HEK293 (cell line): ENCODE measurements at regions of chr7 and their contacts with region 1.

Region 1: GRCh38 chr7:106153891-106154449 is 41.9 kb upstream of the SYPL1 start:
- H3K4me3 ChIP-seq: no peak overlapping the region
- H3K27ac ChIP-seq: no peak overlapping the region
- H3K4me1 ChIP-seq: no peaks in the 10 kb centered on the region
- CTCF ChIP-seq: peak; percentile 84

Region 2: DNA sequence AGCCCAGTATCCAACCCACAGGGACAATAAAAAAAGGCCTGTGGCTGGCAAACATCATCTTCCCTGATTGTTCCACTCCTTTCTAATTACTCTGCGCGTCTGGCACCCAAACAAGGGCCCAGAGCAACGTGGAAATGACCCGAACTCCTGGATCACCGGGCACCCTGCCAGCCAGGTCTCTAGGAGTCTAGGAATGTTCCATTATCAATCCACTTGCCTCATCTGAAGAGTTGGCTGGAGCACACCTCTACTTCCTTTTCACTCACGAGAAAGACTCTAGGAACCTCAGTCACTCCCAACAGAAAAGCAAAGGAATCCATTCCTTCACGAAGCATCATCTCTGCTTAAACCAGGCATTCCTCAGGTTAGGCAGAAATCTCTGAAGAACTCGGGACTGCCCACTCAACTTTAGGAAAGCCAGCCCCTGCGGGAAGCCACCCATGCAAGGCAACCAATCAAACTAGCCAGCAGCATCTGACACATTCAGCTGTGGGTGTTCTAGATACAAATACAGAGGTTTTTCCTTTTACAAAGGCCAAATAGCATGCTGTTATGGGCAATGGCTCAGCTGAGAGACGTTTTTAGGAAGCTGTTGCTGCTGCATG is 315.2 kb before region 1 on chr7:
- CTCF ChIA-PET with region 1: no interaction called
- POLR2A ChIA-PET with region 1: no interaction called
- H3K4me3 ChIP-seq: no peak overlapping the region
- H3K27ac ChIP-seq: no peak overlapping the region
- H3K4me1 ChIP-seq: peaks cover 11% of the 10 kb centered on the region
- CTCF ChIP-seq: no peak

Region 3: DNA sequence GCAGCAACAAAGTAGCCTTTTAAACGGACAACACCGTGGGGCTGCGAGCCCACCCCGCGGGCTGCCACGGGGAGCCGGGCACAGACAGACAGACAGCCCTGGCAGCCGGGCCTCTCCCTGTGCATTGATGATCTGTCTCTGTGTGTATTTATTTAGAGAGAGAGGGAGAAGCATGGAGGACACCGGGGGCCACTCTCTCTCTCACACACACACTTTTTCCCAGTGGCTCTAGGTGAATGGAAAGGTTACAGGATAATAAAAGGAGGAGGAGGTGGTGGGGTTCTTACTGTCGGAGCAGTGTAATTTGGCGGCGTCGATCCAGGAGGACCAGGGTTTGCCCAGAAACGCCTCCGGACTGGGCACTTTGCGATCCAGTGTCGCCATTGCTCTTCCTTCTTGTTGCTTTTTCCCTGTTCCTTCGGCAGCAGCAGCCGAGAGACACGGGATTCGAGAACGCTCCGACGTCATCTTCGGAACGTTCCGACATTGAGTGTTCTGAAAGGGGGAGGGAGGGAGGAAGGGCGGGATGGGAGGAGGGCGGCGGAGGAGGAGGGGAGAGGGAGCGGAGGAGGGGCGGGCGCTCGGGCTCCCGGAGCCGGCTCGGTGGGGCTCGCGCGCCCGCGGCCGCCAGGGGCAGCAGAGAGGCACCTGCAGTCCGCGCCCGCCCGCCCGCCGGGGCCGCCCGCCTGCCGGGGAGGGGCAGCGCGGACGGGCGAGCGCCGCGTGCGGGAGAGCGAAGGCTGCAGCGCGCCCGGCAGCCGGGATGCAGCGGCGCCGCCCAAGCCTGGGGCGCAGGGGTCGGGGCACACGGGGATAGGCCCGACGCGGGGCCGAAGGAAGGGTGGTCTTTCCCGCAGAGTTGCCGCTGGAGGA is 277.6 kb before region 1 on chr7 and contains the start of gene ATXN7L1:
- CTCF ChIA-PET with region 1: interaction called, 10 read pairs
- POLR2A ChIA-PET with region 1: no interaction called
- H3K4me3 ChIP-seq: peak within 1 kb of the TSS; percentile 89
- H3K27ac ChIP-seq: peak within 1 kb of the TSS; percentile 62
- H3K4me1 ChIP-seq: peaks cover 5% of the 10 kb centered on the region
- CTCF ChIP-seq: no peak

Region 4: GRCh38 chr7:105943486-105943885 is 210.5 kb before region 1 on chr7:
- CTCF ChIA-PET with region 1: no interaction called
- POLR2A ChIA-PET with region 1: no interaction called
- H3K4me3 ChIP-seq: no peak overlapping the region
- H3K27ac ChIP-seq: no peak overlapping the region
- H3K4me1 ChIP-seq: no peaks in the 10 kb centered on the region
- CTCF ChIP-seq: no peak

Region 5: DNA sequence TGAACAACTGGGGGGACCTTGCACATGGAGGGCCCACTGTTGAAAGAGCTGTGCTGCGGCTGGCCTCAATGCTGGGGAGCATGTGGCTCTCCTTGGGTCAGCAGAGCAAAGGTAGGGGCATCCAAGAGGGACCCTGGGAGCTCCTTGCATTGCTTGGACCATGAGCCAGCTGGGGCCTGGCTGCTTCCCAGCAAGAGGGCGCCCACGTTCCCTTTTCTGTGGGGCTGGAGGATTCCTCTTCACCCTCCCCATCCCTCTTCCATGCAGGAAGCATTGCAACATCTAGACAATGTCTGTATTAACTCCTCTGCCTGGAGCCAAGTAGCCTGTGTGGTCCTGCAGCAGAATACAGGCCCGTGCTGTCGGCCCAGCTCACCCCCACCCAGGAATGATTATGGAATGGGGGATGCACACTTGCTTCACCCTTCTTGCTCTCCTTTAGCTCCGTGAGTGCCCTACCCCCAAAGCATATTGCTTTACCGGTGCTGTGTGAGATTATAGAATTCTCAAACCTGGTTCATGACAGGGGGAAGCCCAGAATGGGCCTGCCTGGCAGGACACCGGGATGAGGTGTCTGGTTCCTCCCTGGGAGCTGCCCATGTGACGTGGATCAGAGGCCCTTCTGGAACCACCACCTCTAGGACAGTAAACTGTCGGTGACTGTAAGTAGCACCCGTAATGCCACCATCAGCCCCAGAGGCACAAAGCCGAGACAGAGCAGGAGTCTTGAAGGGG is 103.8 kb before region 1 on chr7:
- CTCF ChIA-PET with region 1: interaction called, 144 read pairs
- POLR2A ChIA-PET with region 1: interaction called, 3 read pairs
- H3K4me3 ChIP-seq: no peak overlapping the region
- H3K27ac ChIP-seq: no peak overlapping the region
- H3K4me1 ChIP-seq: peaks cover 3% of the 10 kb centered on the region; the same call in 1 of the 2 replicates
- CTCF ChIP-seq: no peak

Region 6: GRCh38 chr7:106071356-106071998 is 82.5 kb before region 1 on chr7:
- CTCF ChIA-PET with region 1: interaction called, 21 read pairs
- POLR2A ChIA-PET with region 1: no interaction called
- H3K4me3 ChIP-seq: no peak overlapping the region
- H3K27ac ChIP-seq: peak overlapping the region; percentile 45; the same call in 1 of the 2 replicates
- H3K4me1 ChIP-seq: peaks cover 22% of the 10 kb centered on the region
- CTCF ChIP-seq: no peak

Region 7: GRCh38 chr7:106101726-106102125 is 52.2 kb before region 1 on chr7:
- CTCF ChIA-PET with region 1: interaction called, 12 read pairs
- POLR2A ChIA-PET with region 1: no interaction called
- H3K4me3 ChIP-seq: no peak overlapping the region
- H3K27ac ChIP-seq: no peak overlapping the region
- H3K4me1 ChIP-seq: peaks cover 10% of the 10 kb centered on the region
- CTCF ChIP-seq: no peak

Region 8: GRCh38 chr7:106134241-106134640 is 19.7 kb before region 1 on chr7:
- CTCF ChIA-PET with region 1: interaction called, 11 read pairs
- POLR2A ChIA-PET with region 1: interaction called, 5 read pairs
- H3K4me3 ChIP-seq: no peak overlapping the region
- H3K27ac ChIP-seq: no peak overlapping the region
- H3K4me1 ChIP-seq: no peaks in the 10 kb centered on the region
- CTCF ChIP-seq: no peak

Region 9: GRCh38 chr7:106166655-106167342 is 12.8 kb after region 1 on chr7:
- CTCF ChIA-PET with region 1: interaction called, 53 read pairs
- POLR2A ChIA-PET with region 1: no interaction called
- H3K4me3 ChIP-seq: no peak overlapping the region
- H3K27ac ChIP-seq: no peak overlapping the region
- H3K4me1 ChIP-seq: no peaks in the 10 kb centered on the region
- CTCF ChIP-seq: peak; percentile 63

Region 10: DNA sequence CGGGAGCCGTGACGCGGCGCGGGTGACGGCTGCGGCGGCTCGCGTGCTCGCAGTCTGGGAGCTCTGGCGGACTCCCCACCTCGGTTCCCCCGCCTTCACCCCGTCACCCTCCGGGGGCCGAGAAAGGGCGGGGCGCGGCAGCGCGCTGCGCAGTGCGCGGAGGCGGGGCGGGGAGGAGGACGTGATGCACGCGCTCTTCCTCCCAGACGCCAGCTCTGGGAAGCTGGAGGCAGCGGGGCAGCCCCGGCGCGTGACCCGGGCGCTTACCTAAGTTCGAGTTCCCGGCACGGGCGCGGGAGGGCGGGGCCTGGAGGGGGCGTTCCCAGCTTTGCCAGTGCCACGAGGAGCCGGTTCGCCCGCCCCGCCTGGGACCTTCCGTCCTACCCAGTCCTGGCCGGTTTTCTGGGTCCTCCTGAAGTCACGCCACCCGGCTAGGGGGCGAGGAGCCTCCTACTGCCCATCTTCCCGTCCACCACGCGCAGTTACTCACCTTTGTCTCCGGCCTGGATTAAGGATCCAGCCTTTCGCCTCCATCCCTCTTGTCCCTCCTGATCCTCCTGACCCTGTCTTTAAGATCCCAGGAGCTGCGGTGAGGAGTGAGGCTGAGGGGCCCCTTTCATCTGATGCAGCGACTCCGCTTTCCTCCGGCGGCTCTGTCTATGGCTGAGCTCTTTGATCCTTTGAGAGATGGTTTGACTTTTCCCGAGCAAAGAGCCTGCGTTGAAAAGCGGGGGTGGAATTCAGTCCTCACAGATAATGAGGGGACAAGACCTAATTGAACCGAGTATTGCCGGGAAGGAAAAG is 131.3 kb after region 1 on chr7:
- CTCF ChIA-PET with region 1: no interaction called
- POLR2A ChIA-PET with region 1: no interaction called
- H3K4me3 ChIP-seq: peak overlapping the region; percentile 86
- H3K27ac ChIP-seq: peak overlapping the region; percentile 82
- H3K4me1 ChIP-seq: peaks cover 5% of the 10 kb centered on the region; the same call in 1 of the 2 replicates
- CTCF ChIP-seq: no peak